GM12878 (cell line): ENCODE measurements at regions of chr2 and their contacts with region 1.

Region 1: GRCh38 chr2:107545066-107545465 is 281.6 kb upstream of the RGPD4 start:
- DNase-seq: no peak
- ATAC-seq: no peak
- H3K4me3 ChIP-seq: no peak overlapping the region
- H3K27ac ChIP-seq: no peak overlapping the region
- H3K4me1 ChIP-seq: no peaks in the 10 kb centered on the region
- H3K27me3 ChIP-seq: no peaks in the 10 kb centered on the region
- CTCF ChIP-seq: no peak
- EP300 ChIP-seq: no peak
- POLR2A ChIP-seq: no peak
- RAD21 ChIP-seq: no peak

Region 2: GRCh38 chr2:107091163-107091864 is 453.8 kb before region 1 on chr2:
- CTCF ChIA-PET with region 1: no interaction called
- POLR2A ChIA-PET with region 1: no interaction called
- RAD21 ChIA-PET with region 1: no interaction called
- SMC1A ChIA-PET with region 1: no interaction called
- in situ Hi-C with region 1: no loop called
- intact Hi-C with region 1: loop called (anchors 5 kb)
- DNase-seq: no peak
- ATAC-seq: no peak
- H3K4me3 ChIP-seq: no peak overlapping the region
- H3K27ac ChIP-seq: no peak overlapping the region
- H3K4me1 ChIP-seq: no peaks in the 10 kb centered on the region
- H3K27me3 ChIP-seq: no peaks in the 10 kb centered on the region
- CTCF ChIP-seq: no peak
- EP300 ChIP-seq: no peak
- POLR2A ChIP-seq: no peak
- RAD21 ChIP-seq: no peak

Region 3: DNA sequence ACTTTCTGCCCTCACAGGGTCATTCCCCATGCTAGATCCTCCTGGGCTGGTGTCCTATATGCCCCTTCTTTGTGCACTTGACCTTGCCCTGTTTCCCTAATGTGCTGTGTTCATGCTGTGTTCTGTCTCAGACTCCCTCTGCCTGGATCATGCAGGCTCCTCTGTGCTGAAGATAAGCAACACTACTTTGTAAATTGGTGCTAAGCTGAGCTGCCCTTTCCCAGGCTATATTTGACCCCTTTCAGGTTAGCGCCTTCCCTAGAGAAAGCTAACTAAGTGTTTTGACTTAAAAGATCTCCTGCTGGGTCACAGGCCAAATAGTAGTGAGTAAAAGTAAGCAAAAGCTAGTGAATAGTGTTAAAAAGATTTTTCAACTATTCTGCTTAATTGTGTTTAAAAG is 24.4 kb after region 1 on chr2:
- CTCF ChIA-PET with region 1: no interaction called
- POLR2A ChIA-PET with region 1: no interaction called
- RAD21 ChIA-PET with region 1: no interaction called
- SMC1A ChIA-PET with region 1: no interaction called
- in situ Hi-C with region 1: no loop called
- intact Hi-C with region 1: no loop called
- DNase-seq: no peak
- ATAC-seq: no peak
- H3K4me3 ChIP-seq: no peak overlapping the region
- H3K27ac ChIP-seq: no peak overlapping the region
- H3K4me1 ChIP-seq: no peaks in the 10 kb centered on the region
- H3K27me3 ChIP-seq: no peaks in the 10 kb centered on the region
- CTCF ChIP-seq: no peak
- EP300 ChIP-seq: no peak
- POLR2A ChIP-seq: no peak
- RAD21 ChIP-seq: no peak

Region 4: DNA sequence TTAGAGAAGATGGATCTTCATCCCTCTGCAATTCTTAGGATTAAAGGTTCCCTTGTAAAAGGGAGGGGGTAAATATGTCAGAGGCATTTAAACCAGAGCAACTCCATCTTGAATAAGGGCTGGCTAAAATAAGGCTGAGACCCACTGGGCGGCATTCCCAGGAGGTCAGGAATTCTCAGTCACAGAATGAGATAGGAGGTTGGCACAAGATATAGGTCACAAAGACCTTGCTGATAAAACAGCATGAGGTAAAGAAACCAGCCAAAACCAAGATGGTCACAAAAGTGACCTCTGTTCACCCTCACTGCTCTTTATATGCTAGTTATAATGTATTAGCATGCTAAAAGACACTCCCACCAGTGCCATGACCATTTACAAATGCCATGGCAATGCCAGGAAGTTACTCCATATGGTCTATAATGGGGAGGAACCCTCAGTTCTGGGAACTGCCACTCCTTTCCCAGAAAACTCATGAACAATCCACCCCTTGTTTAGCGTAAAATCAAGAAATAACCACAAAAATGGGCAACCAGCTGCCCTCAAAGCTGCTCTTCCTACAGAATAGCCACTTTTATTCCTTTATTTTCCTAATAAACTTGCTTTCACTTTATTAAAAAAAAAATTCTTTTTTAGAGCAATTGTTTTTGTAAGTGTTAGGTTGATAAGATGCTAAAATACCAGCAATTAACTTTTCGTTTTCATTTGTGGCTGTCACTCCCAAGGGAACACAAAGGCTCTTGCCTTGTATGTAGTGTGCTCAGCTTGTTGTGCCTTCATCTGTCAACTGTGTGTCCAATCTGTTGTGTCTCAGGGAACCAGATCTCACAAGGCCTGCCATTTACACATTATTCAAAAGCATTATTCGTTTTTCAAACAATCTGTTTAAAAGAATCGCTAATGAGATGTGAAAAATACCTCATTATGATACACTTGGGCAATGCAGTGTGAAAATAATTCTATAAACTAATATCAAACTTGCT is 76.4 kb after region 1 on chr2:
- CTCF ChIA-PET with region 1: no interaction called
- POLR2A ChIA-PET with region 1: no interaction called
- RAD21 ChIA-PET with region 1: no interaction called
- SMC1A ChIA-PET with region 1: no interaction called
- in situ Hi-C with region 1: no loop called
- intact Hi-C with region 1: no loop called
- DNase-seq: no peak
- ATAC-seq: no peak
- H3K4me3 ChIP-seq: no peak overlapping the region
- H3K27ac ChIP-seq: no peak overlapping the region
- H3K4me1 ChIP-seq: no peaks in the 10 kb centered on the region
- H3K27me3 ChIP-seq: no peaks in the 10 kb centered on the region
- CTCF ChIP-seq: no peak
- EP300 ChIP-seq: no peak
- POLR2A ChIP-seq: no peak
- RAD21 ChIP-seq: no peak

Region 5: DNA sequence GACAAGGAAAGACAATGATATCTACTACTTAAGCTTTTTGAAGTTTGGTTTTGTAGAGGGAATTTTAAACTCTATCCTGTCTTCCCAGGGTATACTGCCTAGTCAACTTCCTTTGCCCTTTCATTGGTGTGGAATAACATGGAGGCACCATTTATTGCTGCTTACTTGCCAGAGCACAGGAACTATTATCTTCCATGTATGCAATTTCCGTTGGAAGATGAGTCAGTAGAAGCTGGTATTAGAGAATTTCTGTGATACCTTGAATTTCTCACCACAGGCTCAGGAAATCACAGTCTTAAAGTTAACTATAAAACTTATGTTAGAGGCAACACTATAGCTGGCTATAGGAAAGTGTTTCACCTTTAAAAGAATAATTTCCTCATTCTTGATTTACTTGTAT is 240.7 kb after region 1 on chr2:
- CTCF ChIA-PET with region 1: no interaction called
- POLR2A ChIA-PET with region 1: no interaction called
- RAD21 ChIA-PET with region 1: no interaction called
- SMC1A ChIA-PET with region 1: no interaction called
- in situ Hi-C with region 1: no loop called
- intact Hi-C with region 1: no loop called
- DNase-seq: no peak
- ATAC-seq: no peak
- H3K4me3 ChIP-seq: no peak overlapping the region
- H3K27ac ChIP-seq: no peak overlapping the region
- H3K4me1 ChIP-seq: no peaks in the 10 kb centered on the region
- H3K27me3 ChIP-seq: no peaks in the 10 kb centered on the region
- CTCF ChIP-seq: no peak
- EP300 ChIP-seq: no peak
- POLR2A ChIP-seq: no peak
- RAD21 ChIP-seq: no peak